A549 (cell line): ENCODE measurements at regions of chr17 and their contacts with region 1.

Region 1: DNA sequence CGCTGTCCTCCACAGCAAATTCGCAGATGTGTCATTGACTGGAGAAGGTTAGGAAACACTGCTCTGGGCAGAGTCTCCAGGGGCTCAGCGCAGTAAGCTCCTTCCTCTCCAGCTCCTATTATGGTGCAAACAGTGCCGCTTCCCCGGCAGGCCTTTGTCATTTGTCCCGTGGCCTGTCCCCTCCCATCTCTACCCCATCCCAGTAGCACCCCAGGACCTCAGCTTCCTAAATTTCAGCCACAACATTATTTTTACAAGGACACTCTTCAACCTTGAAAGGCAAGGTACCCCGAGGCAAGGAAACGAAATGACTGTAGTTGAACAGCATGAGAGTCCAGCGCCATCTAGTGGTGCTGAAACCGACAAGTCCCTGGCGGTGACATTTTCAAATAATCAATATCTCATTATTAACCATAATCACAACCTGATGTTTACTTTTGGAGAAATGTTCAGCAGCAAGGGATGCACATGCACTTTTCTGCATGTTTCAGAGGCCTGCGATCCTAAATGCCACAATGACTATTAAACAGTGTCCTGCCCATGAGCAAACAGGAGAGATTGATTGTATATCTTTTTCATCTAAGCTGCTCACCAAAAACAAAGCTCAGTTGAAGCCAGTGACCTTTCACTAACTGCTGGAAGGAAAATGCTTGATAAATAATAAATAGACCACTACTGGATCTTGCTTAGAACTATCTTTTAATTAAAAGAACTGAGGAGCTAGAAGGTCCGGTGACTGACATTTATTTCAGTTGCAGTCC is 16.5 kb downstream of the MRPS23 start:
- DNase-seq: peak; percentile 59 to 68
- ATAC-seq: peak; percentile 71 to 79; a peak in 5 of 6 replicates
- H3K4me3 ChIP-seq: no peak overlapping the region
- H3K27ac ChIP-seq: peak overlapping the region in 1 of 2 experiments; percentile 46; a peak in 3 of 6 replicates
- H3K4me1 ChIP-seq: peaks cover 14% of the 10 kb centered on the region; the same call in 1 of the 3 replicates
- CTCF ChIP-seq: peak; percentile 99
- EP300 ChIP-seq: no peak
- POLR2A ChIP-seq: no peak
- RAD21 ChIP-seq: peak; percentile 86 to 88

Region 2: GRCh38 chr17:57130761-57131461 is 702.4 kb before region 1 on chr17:
- CTCF ChIA-PET with region 1: interaction called, 89 read pairs
- POLR2A ChIA-PET with region 1: no interaction called
- DNase-seq: peak; percentile 82 to 99
- ATAC-seq: peak; percentile 95 to 96
- H3K4me3 ChIP-seq: peak overlapping the region; percentile 38
- H3K27ac ChIP-seq: peak overlapping the region; percentile 66 to 84
- H3K4me1 ChIP-seq: no peaks in the 10 kb centered on the region
- CTCF ChIP-seq: peak; percentile 99
- EP300 ChIP-seq: no peak
- POLR2A ChIP-seq: no peak
- RAD21 ChIP-seq: peak; percentile 92 to 100

Region 3: GRCh38 chr17:57645950-57646665 is 187.3 kb before region 1 on chr17:
- CTCF ChIA-PET with region 1: no interaction called
- POLR2A ChIA-PET with region 1: no interaction called
- DNase-seq: no peak
- ATAC-seq: no peak
- H3K4me3 ChIP-seq: no peak overlapping the region
- H3K27ac ChIP-seq: no peak overlapping the region
- H3K4me1 ChIP-seq: peaks cover 22% of the 10 kb centered on the region
- CTCF ChIP-seq: no peak
- EP300 ChIP-seq: no peak
- POLR2A ChIP-seq: no peak
- RAD21 ChIP-seq: no peak

Region 4: DNA sequence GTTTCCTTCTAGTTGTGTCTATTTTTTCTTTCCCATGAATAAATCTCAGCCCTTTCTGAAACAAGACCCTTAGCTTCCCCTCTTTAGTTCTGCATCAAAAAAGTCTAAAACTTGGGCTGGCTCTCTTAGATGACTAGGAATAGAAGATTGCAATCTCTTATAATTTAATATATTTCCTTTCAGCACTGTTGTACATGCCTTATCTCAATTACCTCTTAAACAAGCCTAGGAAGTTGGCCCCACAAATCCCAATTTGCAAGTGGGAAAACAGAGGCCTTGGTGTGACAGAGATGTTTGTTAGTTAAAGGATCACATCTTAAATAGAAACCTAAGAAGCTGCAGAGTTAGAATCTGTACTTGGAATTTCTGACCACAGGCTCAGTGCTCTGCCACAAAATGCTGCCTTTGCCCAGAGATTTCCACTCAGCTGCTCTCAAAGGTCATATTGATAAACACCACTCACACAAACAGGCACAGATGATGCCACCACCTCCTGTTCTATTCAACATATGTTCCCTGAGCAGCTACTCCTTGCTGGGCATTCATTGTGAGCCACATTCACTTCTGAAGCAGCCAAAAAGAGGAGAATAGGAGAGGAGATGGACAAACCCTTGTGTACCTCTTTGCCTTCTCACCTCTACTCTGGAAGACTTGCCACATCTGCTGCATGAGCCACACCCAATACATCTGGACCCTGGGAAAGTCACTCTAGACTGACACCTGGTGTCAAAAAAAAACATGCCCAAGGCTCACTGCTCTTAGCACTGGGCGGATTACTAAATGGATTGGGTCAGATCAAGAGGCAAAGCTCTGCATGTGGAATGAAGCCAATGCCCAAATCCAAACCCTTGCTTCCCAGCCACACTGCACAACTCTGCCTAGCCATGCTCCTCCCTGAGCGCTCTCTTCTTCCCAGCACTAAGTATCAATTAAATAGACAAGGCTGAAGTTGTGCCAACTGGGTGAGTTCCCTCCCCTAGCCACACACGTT is 93.7 kb before region 1 on chr17:
- CTCF ChIA-PET with region 1: interaction called, 12 read pairs
- POLR2A ChIA-PET with region 1: no interaction called
- DNase-seq: peak; percentile 53 to 54
- ATAC-seq: peak; percentile 82 to 91
- H3K4me3 ChIP-seq: no peak overlapping the region
- H3K27ac ChIP-seq: no peak overlapping the region
- H3K4me1 ChIP-seq: peaks cover 6% of the 10 kb centered on the region; the same call in 1 of the 3 replicates
- CTCF ChIP-seq: peak; percentile 63
- EP300 ChIP-seq: no peak
- POLR2A ChIP-seq: no peak
- RAD21 ChIP-seq: peak; percentile 61 to 65

Region 5: DNA sequence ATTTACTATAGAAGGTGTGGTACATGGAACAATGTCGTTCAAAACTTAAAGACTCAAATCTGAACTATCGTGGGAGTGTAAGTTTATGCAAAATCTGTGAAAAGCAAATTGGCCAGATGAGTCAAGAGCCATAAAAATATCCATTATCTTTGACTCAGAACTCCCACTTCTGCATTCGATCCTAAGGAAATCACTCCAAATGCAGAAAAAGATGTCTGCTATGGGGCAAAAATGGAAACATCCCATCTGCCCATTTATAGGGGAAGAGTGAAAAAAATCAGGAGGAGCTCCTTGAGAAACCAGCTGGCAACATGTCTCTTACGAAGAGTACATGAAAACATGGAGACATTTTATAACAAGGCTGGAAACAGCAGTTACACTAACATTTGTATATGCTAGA is 44.6 kb before region 1 on chr17:
- CTCF ChIA-PET with region 1: interaction called, 40 read pairs
- POLR2A ChIA-PET with region 1: no interaction called
- DNase-seq: no peak
- ATAC-seq: no peak
- H3K4me3 ChIP-seq: no peak overlapping the region
- H3K27ac ChIP-seq: no peak overlapping the region
- H3K4me1 ChIP-seq: no peaks in the 10 kb centered on the region
- CTCF ChIP-seq: no peak
- EP300 ChIP-seq: no peak
- POLR2A ChIP-seq: no peak
- RAD21 ChIP-seq: no peak

Region 6: DNA sequence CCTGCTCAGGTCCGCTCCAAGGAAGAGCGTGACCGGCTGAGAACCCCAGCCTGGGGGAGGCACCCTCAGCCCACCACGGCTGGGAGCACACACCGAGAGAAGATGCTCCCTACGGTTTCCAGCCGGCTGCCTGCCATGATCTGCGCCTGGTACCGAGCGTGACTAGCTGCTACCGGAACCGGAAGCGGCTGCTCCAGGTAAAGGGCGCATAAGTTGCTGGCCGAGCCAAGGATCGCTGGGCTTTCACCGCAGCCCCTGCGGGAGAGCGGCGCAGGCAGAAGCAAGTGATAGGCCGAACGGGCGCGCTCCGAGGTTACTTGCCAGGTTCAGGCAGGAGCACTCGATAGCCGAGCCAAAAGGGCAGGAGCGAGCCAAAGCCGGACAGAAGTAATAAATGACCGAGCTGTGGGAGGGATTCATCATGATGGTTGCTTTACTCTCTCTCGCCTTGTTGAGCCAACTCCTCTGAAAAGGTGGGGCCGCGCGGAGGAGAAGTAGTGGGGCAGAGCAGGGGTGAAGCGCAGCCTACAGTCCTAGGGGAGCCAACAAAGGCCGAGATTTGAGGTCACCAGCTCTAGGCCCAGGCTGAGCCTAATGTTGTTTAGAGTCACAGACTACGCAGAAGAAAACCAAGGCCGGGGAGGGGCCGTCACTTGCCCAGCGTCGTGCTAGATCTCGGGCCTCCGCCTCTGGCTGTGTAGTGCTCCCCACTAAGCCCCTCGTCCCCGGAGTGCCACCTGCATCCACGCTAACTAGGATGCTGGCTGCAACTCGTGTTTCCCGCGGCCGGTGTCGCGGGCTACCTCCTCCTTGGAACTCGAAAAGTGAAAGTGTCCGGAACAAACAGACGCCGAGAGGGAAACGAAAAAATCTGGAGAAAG is 16.8 kb after region 1 on chr17 and contains the start of gene MRPS23:
- CTCF ChIA-PET with region 1: interaction called, 150 read pairs
- POLR2A ChIA-PET with region 1: no interaction called
- DNase-seq: peak; percentile 91 to 99
- ATAC-seq: peak; percentile 93 to 95
- H3K4me3 ChIP-seq: peak within 1 kb of the TSS; percentile 95
- H3K27ac ChIP-seq: peak within 1 kb of the TSS; percentile 93
- H3K4me1 ChIP-seq: peaks cover 54% of the 10 kb centered on the region
- CTCF ChIP-seq: no peak
- EP300 ChIP-seq: no peak
- POLR2A ChIP-seq: peak; percentile 84
- RAD21 ChIP-seq: peak; percentile 28 to 34; a peak in 4 of 5 replicates
- polyA plus RNA-seq, gene MRPS23: 73.2 and 110 TPM in 2 replicates

Region 7: DNA sequence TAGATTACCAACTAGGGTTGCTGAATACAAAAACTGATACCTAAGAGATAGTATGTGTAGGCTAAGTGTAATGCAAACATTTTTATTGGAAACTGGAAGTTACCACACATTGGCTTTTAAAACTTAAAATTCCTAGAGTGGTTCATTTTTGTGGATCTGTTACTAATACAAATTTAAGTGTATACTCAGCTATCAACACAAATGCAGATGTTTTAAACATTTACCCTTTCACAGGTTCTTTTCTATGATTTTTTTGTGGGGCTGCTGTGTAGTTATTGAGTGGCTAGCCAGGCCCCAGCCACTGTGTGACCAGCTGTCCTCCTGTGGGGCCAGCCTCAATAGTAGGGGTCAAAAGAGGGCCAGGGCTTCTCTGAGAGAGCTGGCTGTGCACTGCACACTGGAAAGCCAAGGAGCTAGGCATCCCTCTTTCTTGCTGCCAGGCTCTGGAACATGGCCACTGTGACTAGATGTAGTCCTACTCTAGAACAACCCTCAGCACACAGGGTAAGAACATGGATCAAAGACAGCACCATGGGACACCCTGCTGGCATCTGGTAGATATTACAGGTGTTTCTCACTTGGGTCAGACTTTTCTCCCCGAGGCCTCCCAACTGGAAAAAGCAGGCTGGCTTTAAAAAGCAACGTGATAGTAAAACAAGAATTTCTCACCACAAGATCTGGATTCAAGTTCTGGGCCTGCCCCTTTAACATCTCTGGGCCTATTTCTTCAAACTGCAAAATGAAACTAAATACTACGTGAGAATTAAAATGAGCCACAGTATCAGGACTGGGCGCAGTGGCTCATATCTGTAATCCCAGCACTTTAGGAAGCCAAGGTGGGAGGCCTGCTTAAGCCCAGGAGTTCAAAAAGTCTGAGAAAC is 162.0 kb after region 1 on chr17:
- CTCF ChIA-PET with region 1: interaction called, 30 read pairs
- POLR2A ChIA-PET with region 1: no interaction called
- DNase-seq: peak; percentile 87 to 95
- ATAC-seq: peak; percentile 84 to 88
- H3K4me3 ChIP-seq: no peak overlapping the region
- H3K27ac ChIP-seq: peak overlapping the region; percentile 50 to 76
- H3K4me1 ChIP-seq: peaks cover 63% of the 10 kb centered on the region
- CTCF ChIP-seq: peak; percentile 90
- EP300 ChIP-seq: no peak
- POLR2A ChIP-seq: no peak
- RAD21 ChIP-seq: peak; percentile 93 to 94